Aorta (tissue), 5 donors: ENCODE measurements at regions of chr3 and their contacts with region 1.

Region 1: GRCh38 chr3:125437631-125438435 is 62.7 kb upstream of the ZNF148 start:
- DNase-seq: peak; percentile 71 to 85
- ATAC-seq: peak; percentile 79
- H3K4me3 ChIP-seq: no peak overlapping the region
- H3K27ac ChIP-seq: no peak overlapping the region
- H3K4me1 ChIP-seq: no peaks in the 10 kb centered on the region
- H3K27me3 ChIP-seq: no peaks in the 10 kb centered on the region

Region 2: DNA sequence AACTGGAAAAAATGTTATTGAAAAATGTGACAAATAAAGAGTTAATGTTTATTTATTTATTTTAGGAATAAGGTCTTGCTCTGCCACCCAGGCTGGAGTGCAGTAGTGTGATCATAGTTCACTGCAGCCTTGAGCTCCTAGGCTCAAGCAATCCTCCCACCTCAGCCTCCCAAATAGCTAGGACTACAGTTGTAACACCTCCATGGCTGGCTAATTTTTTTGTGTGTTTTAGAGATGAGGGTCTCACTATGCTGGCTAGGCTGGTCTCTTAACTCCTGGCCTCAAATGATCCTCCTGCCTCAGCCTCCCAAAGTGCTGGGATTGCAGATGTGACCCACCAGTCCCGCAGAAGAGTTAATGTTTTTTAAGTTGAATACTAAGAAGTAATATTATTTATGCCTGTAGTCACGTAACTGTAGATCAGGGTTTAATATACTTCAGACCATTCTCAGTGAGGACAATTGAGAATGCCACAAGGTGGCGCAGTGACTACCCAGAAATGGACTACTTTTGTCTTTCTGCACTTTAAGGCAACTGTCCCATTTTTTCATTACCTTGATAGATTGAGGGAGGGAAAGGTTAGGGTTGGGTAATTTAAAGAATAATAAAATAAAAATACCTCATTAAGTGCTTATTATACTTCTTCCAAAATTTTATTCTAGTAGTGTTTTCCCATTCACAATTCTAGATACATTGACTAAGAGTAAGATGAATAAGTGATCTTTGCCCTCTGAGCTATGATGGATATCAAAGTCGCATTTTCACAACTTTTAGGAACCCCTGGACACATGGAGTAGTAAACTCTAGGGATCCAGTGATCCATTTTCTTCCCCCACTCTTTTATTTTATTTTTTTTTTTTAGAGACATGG is 509.3 kb before region 1 on chr3:
- intact Hi-C with region 1: loop called (anchors 5 to 10 kb)
- DNase-seq: peak in 1 of 2 donors; percentile 76
- ATAC-seq: no peak
- H3K4me3 ChIP-seq: no peak overlapping the region
- H3K27ac ChIP-seq: no peak overlapping the region
- H3K4me1 ChIP-seq: no peaks in the 10 kb centered on the region
- H3K27me3 ChIP-seq: no peaks in the 10 kb centered on the region

Region 3: GRCh38 chr3:124935264-124935663 is 502.6 kb before region 1 on chr3:
- intact Hi-C with region 1: loop called in 1 of 2 experiments (anchors 10 kb)
- DNase-seq: no peak
- ATAC-seq: no peak
- H3K4me3 ChIP-seq: no peak overlapping the region
- H3K27ac ChIP-seq: no peak overlapping the region
- H3K4me1 ChIP-seq: no peaks in the 10 kb centered on the region
- H3K27me3 ChIP-seq: no peaks in the 10 kb centered on the region

Region 4: DNA sequence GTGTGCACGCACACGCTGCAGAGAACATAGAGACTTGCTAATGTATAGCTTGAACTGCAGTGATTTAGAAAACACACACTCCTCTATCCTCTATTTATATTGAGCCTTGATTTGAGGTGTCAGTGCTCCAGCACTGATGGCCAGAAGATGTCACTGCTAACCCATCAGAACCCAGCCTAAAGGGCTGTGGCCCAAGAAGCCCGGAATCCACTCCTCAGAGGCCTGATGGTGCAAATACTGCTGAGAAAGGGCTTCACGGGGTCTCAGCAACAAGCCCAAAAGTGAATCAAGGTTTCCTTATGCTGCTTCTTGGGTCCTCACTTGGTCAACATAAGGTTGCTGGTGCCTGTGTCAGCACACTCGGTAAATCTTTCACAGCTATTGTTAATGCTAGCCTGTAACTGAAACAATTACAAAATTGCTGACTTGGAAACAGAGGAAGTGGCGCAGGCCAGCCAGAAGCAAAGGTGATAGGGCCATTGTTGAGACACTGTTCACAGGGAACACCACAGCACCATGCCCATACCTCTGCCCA is 442.3 kb before region 1 on chr3:
- intact Hi-C with region 1: loop called (anchors 2 to 5 kb)
- DNase-seq: peak in 1 of 2 donors; percentile 66
- ATAC-seq: peak; percentile 82
- H3K4me3 ChIP-seq: no peak overlapping the region
- H3K27ac ChIP-seq: no peak overlapping the region
- H3K4me1 ChIP-seq: no peaks in the 10 kb centered on the region
- H3K27me3 ChIP-seq: no peaks in the 10 kb centered on the region

Region 5: DNA sequence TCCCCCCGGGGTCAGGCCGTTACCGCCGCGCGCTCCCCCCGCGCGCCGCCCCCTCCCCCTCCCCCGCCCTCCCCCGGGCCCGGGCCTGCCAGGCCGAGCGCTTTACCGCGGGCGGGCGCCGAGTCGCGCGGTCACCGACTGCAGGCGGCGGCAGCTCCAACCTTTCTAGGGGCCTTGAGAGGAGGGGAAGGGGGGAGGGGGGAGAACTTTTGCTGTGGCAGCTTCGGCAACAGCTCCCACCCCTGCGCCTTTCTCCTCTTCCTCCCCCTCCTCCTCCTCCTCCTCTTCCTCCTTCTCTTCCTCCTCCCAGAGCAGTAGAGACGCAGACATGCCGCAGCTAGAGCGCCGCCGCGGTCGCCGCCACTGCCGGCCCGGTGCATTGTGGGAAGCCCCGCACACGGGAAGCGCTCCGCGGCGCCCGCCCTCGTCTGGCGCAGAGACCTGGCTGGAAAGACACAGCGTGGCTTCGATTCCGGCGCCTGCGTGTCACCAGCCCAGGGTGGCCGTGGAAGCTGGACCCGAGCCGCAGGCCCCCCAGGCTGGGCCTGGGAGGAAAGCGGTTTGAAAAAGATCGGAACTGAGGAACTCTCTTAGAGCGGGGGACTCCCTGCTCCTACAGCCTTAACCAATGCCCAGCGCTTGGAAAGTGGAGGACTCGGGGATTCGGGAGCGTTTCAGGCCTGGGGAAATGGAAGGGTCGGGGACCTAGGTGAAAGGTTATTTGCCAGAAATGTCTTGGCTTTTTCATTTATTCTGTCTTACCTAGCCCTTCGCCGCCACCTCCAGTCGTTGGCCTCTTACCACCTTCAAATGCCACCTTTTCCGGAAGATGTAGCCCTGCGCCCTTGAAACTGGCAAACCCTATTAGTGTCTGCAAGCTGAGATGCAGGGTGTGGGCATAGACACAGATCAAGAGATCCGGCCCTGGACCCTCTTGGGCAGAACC is 62.6 kb before region 1 on chr3 and contains the start of gene ZNF148:
- intact Hi-C with region 1: loop called in 1 of 2 experiments (anchors 5 kb)
- DNase-seq: peak; percentile 95 to 97
- ATAC-seq: peak; percentile 99
- H3K4me3 ChIP-seq: peak within 1 kb of the TSS; percentile 87 to 93
- H3K27ac ChIP-seq: peak within 1 kb of the TSS; percentile 30 to 75
- H3K4me1 ChIP-seq: peaks cover 5 to 7% of the 10 kb centered on the region in 2 donors
- H3K27me3 ChIP-seq: no peaks in the 10 kb centered on the region
- total RNA-seq, gene ZNF148: 53.8 to 63.8 TPM